ENCODE measurements at regions of chr5 and their contacts with region 1.

Region 1: GRCh38 chr5:142507531-142508372 is 178.1 kb downstream of the FGF1 start:
- DNase-seq: peak; percentile 51
- ATAC-seq: peak; percentile 82
- H3K4me3 Mint-ChIP-seq: no peak overlapping the region
- H3K27ac Mint-ChIP-seq: peak overlapping the region; percentile 60
- H3K4me1 Mint-ChIP-seq: peaks cover 56% of the 10 kb centered on the region
- H3K27me3 Mint-ChIP-seq: no peaks in the 10 kb centered on the region

Region 2: GRCh38 chr5:142472300-142472951 is 35.3 kb before region 1 on chr5:
- CTCF ChIA-PET with region 1: no interaction called
- POLR2A ChIA-PET with region 1: no interaction called
- intact Hi-C with region 1: loop called (anchors 1 to 5 kb)
- DNase-seq: peak; percentile 78
- ATAC-seq: peak; percentile 100
- H3K4me3 Mint-ChIP-seq: no peak overlapping the region
- H3K27ac Mint-ChIP-seq: peak overlapping the region; percentile 92
- H3K4me1 Mint-ChIP-seq: peaks cover 21% of the 10 kb centered on the region
- H3K27me3 Mint-ChIP-seq: no peaks in the 10 kb centered on the region

Region 3: GRCh38 chr5:142686210-142686734 is 178.5 kb after region 1 on chr5:
- CTCF ChIA-PET with region 1: no interaction called
- POLR2A ChIA-PET with region 1: no interaction called
- intact Hi-C with region 1: no loop called
- DNase-seq: no peak
- ATAC-seq: no peak
- H3K4me3 Mint-ChIP-seq: no peak overlapping the region
- H3K27ac Mint-ChIP-seq: no peak overlapping the region
- H3K4me1 Mint-ChIP-seq: no peaks in the 10 kb centered on the region
- H3K27me3 Mint-ChIP-seq: peaks cover 7% of the 10 kb centered on the region

Measured in activated CD4-positive, alpha-beta T cell treated with anti-CD3 and anti-CD28 coated beads for 36 hours (primary cell).